Activated T-helper 1 cell treated with anti-CD3 and anti-CD28 coated beads, Interleukin-12 subunit alpha, Interleukin-12 subunit beta, Interleukin-2, Interleukin-4 antibody, amounts not matched to agents 30 ng/mL and 10 ng/mL and 1 ng/mL, durations not matched to agents 14 hours and 24 hours and 36 hours (primary cell): ENCODE measurements at regions of chr1 and their contacts with region 1.

Region 1: DNA sequence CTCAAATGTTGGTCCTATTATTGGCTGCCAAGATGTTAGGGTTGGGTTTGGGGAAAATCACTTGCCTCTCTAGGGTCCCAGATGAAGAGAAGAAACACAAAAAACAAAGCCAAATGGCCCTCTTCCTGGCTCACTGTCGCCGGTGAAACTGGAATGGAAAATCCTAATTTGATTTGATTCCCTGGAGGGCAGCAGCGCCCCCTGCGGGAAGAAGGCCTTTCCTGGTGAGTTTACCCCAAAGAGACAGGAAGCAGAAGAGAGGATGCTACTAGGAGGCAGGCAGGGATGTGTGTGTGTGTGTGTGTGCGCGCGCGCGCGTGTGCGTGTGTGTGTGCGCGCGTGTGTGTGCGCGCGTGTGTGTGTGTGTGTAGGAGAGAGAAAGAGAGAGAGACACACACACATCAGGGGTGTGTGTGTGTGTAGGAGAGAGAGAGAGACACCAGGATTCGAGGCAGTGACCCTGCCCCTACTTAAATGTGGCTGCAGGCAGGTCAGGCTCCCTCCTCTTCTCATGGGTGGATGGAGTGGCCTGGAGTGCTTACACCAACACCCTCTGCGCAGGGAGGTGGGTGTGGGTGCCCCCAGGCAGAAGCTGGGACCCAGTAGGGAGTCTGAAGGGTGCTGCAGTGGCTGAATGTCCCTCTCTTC is 3.1 kb upstream of the SELENON start:
- DNase-seq: peak; percentile 65
- H3K4me3 Mint-ChIP-seq: peak overlapping the region; percentile 0
- H3K27ac Mint-ChIP-seq: peak overlapping the region; percentile 9
- H3K4me1 Mint-ChIP-seq: peaks cover 17% of the 10 kb centered on the region
- H3K27me3 Mint-ChIP-seq: peaks cover 31% of the 10 kb centered on the region

Region 2: DNA sequence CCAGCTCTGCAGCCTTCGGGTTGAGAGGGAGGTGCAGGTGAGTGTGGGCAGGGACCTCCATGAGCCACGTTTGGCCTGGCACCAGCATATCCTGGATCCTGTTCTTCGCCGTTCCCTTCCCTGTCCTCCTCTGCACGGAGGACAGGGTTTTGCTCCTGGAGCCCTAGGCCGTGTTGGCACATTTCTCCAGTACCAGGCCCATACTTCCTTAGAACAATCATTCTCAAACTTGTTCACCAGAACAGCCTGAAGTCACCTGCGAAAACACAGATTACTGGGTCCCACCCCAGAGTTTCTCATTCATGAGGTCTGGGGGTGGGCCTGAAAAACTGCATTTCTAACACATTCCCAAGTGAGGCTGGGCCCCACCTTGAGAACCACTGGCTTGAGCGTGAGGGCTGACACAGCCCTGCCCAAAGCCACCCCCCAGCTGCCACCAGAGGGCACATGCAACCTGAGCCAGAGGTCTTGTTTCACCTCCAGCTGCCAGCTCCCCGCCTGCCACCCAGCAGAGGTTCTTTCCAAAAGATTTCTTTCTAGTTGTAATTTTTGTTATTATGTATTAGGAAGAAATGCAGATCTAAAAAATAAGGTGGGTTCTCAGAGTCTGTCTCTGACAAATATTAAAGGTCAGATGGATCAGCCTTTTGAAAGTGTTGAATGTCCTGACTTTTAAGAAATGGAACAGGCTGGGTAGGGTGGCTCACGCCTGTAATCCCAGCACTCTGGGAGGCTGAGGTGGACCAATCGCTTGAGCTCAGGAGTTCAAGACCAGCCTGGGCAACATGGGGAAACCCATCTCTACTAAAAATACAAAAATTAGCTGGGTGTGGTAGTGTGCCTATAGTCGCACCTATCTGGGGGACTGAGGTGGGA is 293.1 kb before region 1 on chr1:
- intact Hi-C with region 1: loop called (anchors 5 kb)
- DNase-seq: peak; percentile 24
- H3K4me3 Mint-ChIP-seq: no peak overlapping the region
- H3K27ac Mint-ChIP-seq: no peak overlapping the region
- H3K4me1 Mint-ChIP-seq: peaks cover 12% of the 10 kb centered on the region
- H3K27me3 Mint-ChIP-seq: no peaks in the 10 kb centered on the region

Region 3: GRCh38 chr1:25549273-25550154 is 247.4 kb before region 1 on chr1:
- intact Hi-C with region 1: loop called (anchors 5 kb)
- DNase-seq: peak; percentile 64
- H3K4me3 Mint-ChIP-seq: peak overlapping the region; percentile 61
- H3K27ac Mint-ChIP-seq: peak overlapping the region; percentile 80
- H3K4me1 Mint-ChIP-seq: peaks cover 39% of the 10 kb centered on the region
- H3K27me3 Mint-ChIP-seq: peaks cover 13% of the 10 kb centered on the region

Region 4: DNA sequence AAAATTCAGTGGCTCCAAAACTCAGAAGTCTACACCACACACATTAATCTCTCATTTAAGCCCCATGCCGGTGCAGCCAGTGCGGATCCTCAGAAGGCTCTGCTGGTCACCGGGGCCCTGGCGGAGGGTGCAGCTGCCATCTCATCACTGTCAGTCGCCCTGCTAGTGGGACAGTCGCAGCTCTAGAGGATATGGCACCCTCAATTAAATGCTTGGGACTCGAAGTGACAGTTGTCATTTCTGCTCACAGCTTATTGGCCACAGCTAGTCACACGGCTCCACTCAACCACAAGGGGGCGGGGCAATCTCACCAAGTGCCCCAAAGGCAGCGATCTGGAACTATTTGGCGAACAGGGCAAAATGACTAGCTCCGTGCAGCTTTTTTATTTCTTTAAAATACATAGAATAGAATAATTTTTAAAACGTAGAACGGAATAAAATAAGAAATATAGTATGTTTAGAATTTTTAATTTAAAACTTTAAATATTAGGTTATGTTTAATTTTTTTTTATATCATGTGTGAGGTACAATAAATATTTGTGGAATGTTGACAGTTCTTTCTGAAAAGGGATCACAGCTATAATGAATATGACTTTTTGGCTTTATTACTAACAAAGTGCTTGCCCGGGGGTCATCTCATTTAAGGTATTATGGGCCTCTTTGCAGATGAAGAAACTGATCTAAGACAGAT is 188.3 kb before region 1 on chr1:
- intact Hi-C with region 1: loop called (anchors 1 kb)
- DNase-seq: peak; percentile 76
- H3K4me3 Mint-ChIP-seq: no peak overlapping the region
- H3K27ac Mint-ChIP-seq: no peak overlapping the region
- H3K4me1 Mint-ChIP-seq: no peaks in the 10 kb centered on the region
- H3K27me3 Mint-ChIP-seq: peaks cover 71% of the 10 kb centered on the region

Region 5: DNA sequence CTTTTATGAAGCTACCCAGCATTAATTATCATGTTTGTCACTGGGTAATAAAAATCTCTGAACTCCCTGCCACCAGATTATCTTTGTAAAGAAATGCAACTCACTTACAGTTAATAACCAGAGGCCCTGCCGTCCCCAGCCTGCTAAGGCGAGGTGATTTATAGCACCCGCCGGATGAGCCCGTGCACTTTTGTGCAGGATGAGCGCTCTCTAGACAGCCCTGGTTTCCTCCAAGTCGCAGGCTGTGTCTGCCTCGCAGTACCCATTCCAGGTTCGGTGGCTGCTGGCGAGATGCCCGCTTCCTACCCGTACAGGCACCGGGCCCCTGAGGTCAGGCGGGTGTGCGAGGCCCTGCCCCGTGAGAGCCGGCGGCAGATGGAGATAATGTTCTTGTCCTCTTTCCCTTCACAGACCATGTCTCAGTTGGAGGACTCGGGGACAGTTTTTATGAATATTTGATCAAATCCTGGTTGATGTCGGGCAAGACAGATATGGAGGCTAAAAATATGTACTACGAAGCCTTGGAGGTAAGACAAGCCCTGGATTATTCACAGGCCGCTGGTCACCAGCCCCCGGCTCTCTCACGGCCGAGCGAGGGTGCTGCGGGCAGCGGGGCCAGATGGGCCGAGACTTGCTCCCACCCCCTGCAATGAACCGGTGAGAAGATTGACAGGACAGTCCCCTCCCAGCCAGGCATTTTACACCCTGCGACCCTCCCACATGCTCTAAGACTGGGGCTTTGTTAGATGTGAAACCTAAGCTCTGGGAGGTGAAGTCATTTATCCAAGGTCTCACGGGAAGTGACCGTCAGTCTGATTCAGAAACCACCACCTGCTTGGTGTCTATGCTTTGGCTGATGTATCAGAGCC is 25.5 kb before region 1 on chr1:
- intact Hi-C with region 1: loop called (anchors 1 kb)
- DNase-seq: no peak
- H3K4me3 Mint-ChIP-seq: no peak overlapping the region
- H3K27ac Mint-ChIP-seq: no peak overlapping the region
- H3K4me1 Mint-ChIP-seq: peaks cover 29% of the 10 kb centered on the region
- H3K27me3 Mint-ChIP-seq: peaks cover 42% of the 10 kb centered on the region

Region 6: DNA sequence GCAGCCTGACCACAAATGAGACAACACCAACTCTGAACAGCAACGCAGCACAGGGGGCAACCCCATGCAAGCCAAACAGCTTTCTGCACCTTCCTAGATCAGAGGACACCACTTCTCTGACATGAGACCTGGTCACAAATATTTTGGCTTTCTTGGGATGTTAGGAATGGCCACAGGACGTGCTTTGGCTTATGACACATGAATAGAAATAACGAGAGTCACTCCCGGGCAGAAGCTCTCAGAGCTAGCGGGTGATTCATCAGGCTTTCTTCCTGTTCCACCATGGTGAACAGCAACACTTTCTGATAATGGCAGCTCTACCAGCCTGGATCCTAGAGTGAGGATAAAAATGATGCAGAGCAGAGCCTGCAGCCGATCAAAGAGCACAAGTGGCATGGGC is 161.5 kb after region 1 on chr1:
- intact Hi-C with region 1: no loop called
- DNase-seq: no peak
- H3K4me3 Mint-ChIP-seq: no peak overlapping the region
- H3K27ac Mint-ChIP-seq: no peak overlapping the region
- H3K4me1 Mint-ChIP-seq: peaks cover 4% of the 10 kb centered on the region
- H3K27me3 Mint-ChIP-seq: peaks cover 3% of the 10 kb centered on the region

Region 7: DNA sequence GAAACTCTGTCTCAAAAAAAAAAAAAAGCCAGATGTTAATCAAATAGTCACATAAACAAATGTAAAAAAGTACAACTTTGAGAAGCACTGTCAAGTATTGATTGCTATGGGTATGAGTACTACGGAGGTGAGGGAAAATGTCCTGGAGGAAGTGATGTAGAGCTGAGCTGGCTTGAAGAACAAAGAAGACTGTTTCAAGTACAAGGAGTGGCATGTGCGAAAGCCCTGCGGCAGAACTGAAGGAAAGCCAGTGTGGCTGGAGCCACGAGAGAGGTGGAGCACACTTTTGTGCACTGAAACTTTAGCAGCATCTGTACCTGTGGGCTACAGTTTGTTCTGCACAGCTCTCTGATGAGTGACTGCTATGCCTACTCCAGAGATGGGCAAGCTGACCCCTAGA is 727.2 kb after region 1 on chr1:
- intact Hi-C with region 1: no loop called
- DNase-seq: no peak
- H3K4me3 Mint-ChIP-seq: no peak overlapping the region
- H3K27ac Mint-ChIP-seq: peak overlapping the region; percentile 52
- H3K4me1 Mint-ChIP-seq: peaks cover 14% of the 10 kb centered on the region
- H3K27me3 Mint-ChIP-seq: peaks cover 14% of the 10 kb centered on the region